Ovary (tissue), 10 donors: ENCODE measurements at regions of chr7 and their contacts with region 1.

Region 1: DNA sequence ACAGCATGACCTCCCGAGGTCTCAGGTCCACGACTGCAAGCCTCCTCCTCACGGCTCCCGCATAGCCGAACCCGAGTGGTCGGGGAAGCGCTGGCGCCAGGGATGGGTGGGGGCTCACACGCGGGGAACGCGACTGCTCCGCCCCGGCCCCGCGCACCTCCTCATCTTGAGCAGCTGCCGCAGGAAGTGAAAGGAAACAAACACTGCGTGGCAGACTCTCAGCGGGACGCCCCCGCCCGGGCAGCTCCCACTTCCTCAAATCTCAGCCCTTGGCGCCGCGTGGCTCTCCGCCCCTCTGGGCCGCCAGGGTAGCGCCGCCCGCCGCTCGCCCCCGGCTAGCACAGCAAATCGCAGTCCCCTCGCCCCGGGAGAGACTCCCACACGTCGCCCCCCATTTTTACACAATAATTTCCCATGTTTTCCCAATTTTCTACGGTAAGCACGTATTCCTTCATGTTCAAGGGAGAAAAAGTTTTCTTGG is at the start of gene TMEM243:
- DNase-seq: peak; percentile 77 to 86 (median 79)
- H3K4me3 ChIP-seq: peak within 1 kb of the TSS; percentile 88
- H3K27ac ChIP-seq: peak within 1 kb of the TSS; percentile 65 to 92
- H3K4me1 ChIP-seq: peaks cover 4% of the 10 kb centered on the region
- H3K27me3 ChIP-seq: no peaks in the 10 kb centered on the region
- CTCF ChIP-seq: peak in 1 of 3 donors; percentile 25
- EP300 ChIP-seq: no peak
- POLR2A ChIP-seq: peak; percentile 49
- total RNA-seq, gene TMEM243: 23.4 to 57.8 (median 26.7) TPM

Region 2: DNA sequence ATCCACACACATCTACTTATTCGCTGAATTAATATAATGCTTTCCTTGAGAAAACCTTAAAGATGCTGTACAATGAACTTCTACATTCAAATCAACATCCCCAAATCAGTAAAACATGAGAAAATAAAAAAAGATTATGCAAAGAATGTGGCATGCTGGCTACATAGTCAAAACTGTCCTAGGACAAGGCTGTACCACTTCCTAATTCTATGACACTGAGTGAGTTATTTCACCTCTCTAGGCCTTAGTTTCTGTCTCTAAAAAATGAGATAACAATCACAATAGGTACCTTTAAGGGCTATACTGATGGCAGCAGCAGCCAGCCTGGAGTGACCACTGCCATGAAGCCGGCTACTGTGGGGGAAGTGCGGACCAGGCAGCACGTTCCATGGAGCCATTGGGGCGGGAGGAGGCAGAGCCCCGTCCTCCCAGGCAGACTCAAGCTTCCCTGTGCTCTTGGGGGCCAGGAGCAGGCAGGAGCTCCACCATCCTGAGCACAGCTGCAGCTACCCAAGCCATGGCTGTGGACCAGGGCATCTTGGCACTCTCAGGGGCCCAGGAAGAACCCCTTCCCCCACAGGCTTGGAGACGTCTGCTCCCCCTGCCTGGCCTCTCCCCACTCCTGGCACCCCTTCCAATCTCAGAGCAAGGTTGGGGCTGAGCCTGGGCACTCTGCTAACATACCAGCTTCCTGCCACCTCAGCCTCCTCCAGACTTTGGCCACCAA is 270.4 kb before region 1 on chr7:
- intact Hi-C with region 1: loop called in 1 of 4 experiments (anchors 10 kb)
- DNase-seq: no peak
- H3K4me3 ChIP-seq: no peak overlapping the region
- H3K27ac ChIP-seq: no peak overlapping the region
- H3K4me1 ChIP-seq: no peaks in the 10 kb centered on the region
- H3K27me3 ChIP-seq: no peaks in the 10 kb centered on the region
- CTCF ChIP-seq: no peak
- EP300 ChIP-seq: no peak
- POLR2A ChIP-seq: no peak

Region 3: GRCh38 chr7:87152107-87152844 is 67.3 kb before region 1 on chr7 and contains the start of gene DMTF1:
- intact Hi-C with region 1: loop called in 3 of 4 experiments (anchors 2 to 10 kb)
- DNase-seq: peak; percentile 92 to 97 (median 94)
- H3K4me3 ChIP-seq: peak within 1 kb of the TSS; percentile 97
- H3K27ac ChIP-seq: peak within 1 kb of the TSS; percentile 92 to 96
- H3K4me1 ChIP-seq: no peaks in the 10 kb centered on the region
- H3K27me3 ChIP-seq: no peaks in the 10 kb centered on the region
- CTCF ChIP-seq: peak in 1 of 3 donors; percentile 24
- EP300 ChIP-seq: peak; percentile 8
- POLR2A ChIP-seq: peak; percentile 63
- total RNA-seq, gene DMTF1: 59.9 to 107 (median 84.2) TPM

Region 4: GRCh38 chr7:87506246-87507180 is 286.9 kb after region 1 on chr7:
- intact Hi-C with region 1: no loop called
- DNase-seq: no peak
- H3K4me3 ChIP-seq: no peak overlapping the region
- H3K27ac ChIP-seq: no peak overlapping the region
- H3K4me1 ChIP-seq: no peaks in the 10 kb centered on the region
- H3K27me3 ChIP-seq: no peaks in the 10 kb centered on the region
- CTCF ChIP-seq: peak in 1 of 3 donors; percentile 9
- EP300 ChIP-seq: no peak
- POLR2A ChIP-seq: no peak